AG04449 (cell line): ENCODE measurements at regions of chr5 and their contacts with region 1.

Region 1: GRCh38 chr5:43019614-43020293 is 20.4 kb downstream of the ANXA2R start:
- DNase-seq: no peak
- H3K4me3 ChIP-seq: peak overlapping the region; percentile 74
- CTCF ChIP-seq: peak; percentile 70

Region 2: DNA sequence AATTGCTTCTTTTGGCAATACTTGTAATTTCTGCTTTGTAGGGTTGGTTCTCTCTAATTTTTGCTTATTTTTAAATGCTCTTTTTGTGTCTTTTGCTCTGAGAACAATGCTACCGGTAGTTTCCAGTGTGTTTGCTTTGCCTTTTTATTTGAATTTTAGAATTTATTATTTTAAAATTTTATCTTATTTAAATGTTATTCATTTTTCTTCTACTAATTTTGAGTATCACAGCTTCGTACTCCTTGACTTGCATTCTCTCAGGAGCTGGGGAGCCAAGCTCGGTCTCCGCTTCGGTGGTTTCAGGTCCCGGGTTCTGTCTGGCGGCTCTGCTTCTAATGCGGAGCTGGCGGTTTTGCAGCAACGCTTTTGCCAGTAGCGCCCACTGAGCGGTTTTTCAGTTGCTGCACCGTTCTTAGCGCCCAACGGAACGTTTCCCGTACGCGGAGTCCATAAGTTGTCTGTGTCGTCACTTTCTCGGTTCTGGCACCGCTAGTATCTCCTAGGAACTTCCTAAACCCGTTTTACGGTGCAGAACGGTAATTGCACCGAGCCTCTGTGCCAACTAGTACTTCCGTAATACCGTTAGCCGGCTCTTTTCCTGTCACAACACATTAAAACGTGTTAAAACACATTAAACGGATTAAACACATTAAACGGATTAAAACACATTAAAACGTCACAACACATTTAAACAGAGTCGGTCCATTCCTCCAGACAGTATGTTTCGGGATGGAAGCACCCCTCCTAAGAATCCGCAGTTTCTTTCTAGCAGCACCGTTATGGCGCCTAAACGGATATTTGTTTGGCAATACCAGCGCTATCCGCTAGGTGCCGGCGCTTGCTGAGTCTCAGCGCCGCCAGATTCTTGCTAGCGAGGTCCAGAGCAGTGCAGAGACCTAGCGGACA is 25.3 kb before region 1 on chr5:
- CTCF ChIA-PET with region 1: interaction called, 10 read pairs
- POLR2A ChIA-PET with region 1: interaction called, 13 read pairs
- DNase-seq: no peak
- H3K4me3 ChIP-seq: peak overlapping the region; percentile 69
- CTCF ChIP-seq: peak; percentile 83

Region 3: GRCh38 chr5:43034591-43034968 is 14.8 kb after region 1 on chr5:
- CTCF ChIA-PET with region 1: interaction called, 27 read pairs
- POLR2A ChIA-PET with region 1: interaction called, 24 read pairs
- DNase-seq: no peak
- H3K4me3 ChIP-seq: peak overlapping the region; percentile 47
- CTCF ChIP-seq: no peak